ENCODE measurements at regions of chr17 and their contacts with region 1.

Region 1: GRCh38 chr17:32621617-32622312 is 135.0 kb downstream of the CDK5R1 start:
- DNase-seq: no peak
- ATAC-seq: peak; percentile 27
- H3K4me3 ChIP-seq: no peak overlapping the region
- H3K4me1 ChIP-seq: no peaks in the 10 kb centered on the region
- CTCF ChIP-seq: no peak

Region 2: GRCh38 chr17:32586666-32587065 is 35.1 kb before region 1 on chr17:
- intact Hi-C with region 1: loop called in 1 of 2 experiments (anchors 2 kb)
- DNase-seq: no peak
- ATAC-seq: no peak
- H3K4me3 ChIP-seq: no peak overlapping the region
- H3K4me1 ChIP-seq: no peaks in the 10 kb centered on the region
- CTCF ChIP-seq: no peak